Activated CD8-positive, alpha-beta T cell treated with anti-CD3 and anti-CD28 coated beads for 36 hours (primary cell): ENCODE measurements at regions of chr10 and their contacts with region 1.

Region 1: DNA sequence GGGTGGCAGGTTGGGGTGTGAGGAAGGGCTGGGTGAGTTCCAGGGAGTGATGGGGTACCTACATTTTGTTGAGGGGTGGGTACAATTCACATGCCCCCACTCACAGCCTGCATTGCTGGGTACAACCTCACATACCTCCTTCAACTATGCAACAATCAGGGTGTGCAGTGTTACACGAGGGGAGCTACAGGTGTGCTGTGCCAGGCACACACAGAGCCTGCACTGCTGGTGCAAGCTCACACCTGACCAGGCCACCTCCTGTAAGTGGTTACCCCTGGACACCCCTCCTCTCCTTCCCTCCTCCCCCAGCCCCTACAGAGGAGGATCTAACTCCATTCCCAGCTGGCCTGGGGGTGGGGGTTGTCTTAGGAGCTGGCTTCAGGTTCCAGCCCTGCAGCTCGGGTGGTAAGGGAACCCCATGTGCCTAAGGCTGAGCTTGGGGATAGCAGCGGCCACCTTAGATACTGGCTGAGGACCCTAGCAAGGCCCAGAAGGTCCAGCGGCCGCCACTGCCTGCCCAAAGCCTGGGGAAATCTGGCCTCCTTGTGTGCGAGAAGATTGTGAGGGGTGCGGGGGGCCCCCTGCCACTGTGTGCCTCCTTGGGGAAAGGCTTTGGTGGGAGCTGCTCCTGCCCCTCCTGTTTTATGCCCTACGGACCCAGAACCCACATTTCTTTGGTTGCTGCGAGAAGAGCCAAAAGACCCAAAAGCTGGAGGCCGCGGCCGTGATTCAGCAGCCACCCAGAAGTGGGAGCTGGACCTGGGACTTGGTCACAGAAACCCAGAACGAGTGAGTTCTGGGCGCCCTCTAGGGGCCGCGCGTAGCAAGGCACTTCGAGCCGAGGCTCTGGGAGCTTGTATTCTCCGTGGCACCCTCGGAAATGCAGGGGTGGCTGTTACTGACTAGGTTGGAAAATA is 10.8 kb downstream of the TLX1 start:
- DNase-seq: peak; percentile 89
- ATAC-seq: peak; percentile 93
- H3K4me3 Mint-ChIP-seq: no peak overlapping the region
- H3K27ac Mint-ChIP-seq: no peak overlapping the region
- H3K4me1 Mint-ChIP-seq: peaks cover 14% of the 10 kb centered on the region
- H3K27me3 Mint-ChIP-seq: peaks cover 81% of the 10 kb centered on the region
- CTCF ChIP-seq: peak; percentile 99

Region 2: GRCh38 chr10:100872034-100872791 is 269.7 kb before region 1 on chr10:
- CTCF ChIA-PET with region 1: no interaction called
- POLR2A ChIA-PET with region 1: no interaction called
- intact Hi-C with region 1: no loop called
- DNase-seq: peak; percentile 78
- ATAC-seq: peak; percentile 87
- H3K4me3 Mint-ChIP-seq: no peak overlapping the region
- H3K27ac Mint-ChIP-seq: no peak overlapping the region
- H3K4me1 Mint-ChIP-seq: no peaks in the 10 kb centered on the region
- H3K27me3 Mint-ChIP-seq: peaks cover 8% of the 10 kb centered on the region
- CTCF ChIP-seq: peak; percentile 69

Region 3: GRCh38 chr10:101050208-101051069 is 91.4 kb before region 1 on chr10:
- CTCF ChIA-PET with region 1: interaction called, 58 read pairs
- POLR2A ChIA-PET with region 1: no interaction called
- intact Hi-C with region 1: no loop called
- DNase-seq: peak; percentile 83
- ATAC-seq: peak; percentile 97
- H3K4me3 Mint-ChIP-seq: no peak overlapping the region
- H3K27ac Mint-ChIP-seq: no peak overlapping the region
- H3K4me1 Mint-ChIP-seq: peaks cover 9% of the 10 kb centered on the region
- H3K27me3 Mint-ChIP-seq: peaks cover 48% of the 10 kb centered on the region
- CTCF ChIP-seq: peak; percentile 88

Region 4: GRCh38 chr10:101085846-101086245 is 56.0 kb before region 1 on chr10:
- CTCF ChIA-PET with region 1: interaction called, 507 read pairs
- POLR2A ChIA-PET with region 1: no interaction called
- intact Hi-C with region 1: no loop called
- DNase-seq: no peak
- ATAC-seq: no peak
- H3K4me3 Mint-ChIP-seq: no peak overlapping the region
- H3K27ac Mint-ChIP-seq: no peak overlapping the region
- H3K4me1 Mint-ChIP-seq: no peaks in the 10 kb centered on the region
- H3K27me3 Mint-ChIP-seq: peaks cover 47% of the 10 kb centered on the region
- CTCF ChIP-seq: no peak

Region 5: GRCh38 chr10:101120884-101121653 is 20.8 kb before region 1 on chr10:
- CTCF ChIA-PET with region 1: interaction called, 49 read pairs
- POLR2A ChIA-PET with region 1: interaction called, 6 read pairs
- intact Hi-C with region 1: no loop called
- DNase-seq: peak; percentile 58
- ATAC-seq: peak; percentile 77
- H3K4me3 Mint-ChIP-seq: peak overlapping the region; percentile 73
- H3K27ac Mint-ChIP-seq: peak overlapping the region; percentile 52
- H3K4me1 Mint-ChIP-seq: peaks cover 26% of the 10 kb centered on the region
- H3K27me3 Mint-ChIP-seq: peaks cover 45% of the 10 kb centered on the region
- CTCF ChIP-seq: no peak

Region 6: GRCh38 chr10:101161494-101162299 is 19.8 kb after region 1 on chr10:
- CTCF ChIA-PET with region 1: interaction called, 93 read pairs
- POLR2A ChIA-PET with region 1: no interaction called
- intact Hi-C with region 1: no loop called
- DNase-seq: peak; percentile 77
- ATAC-seq: peak; percentile 96
- H3K4me3 Mint-ChIP-seq: no peak overlapping the region
- H3K27ac Mint-ChIP-seq: no peak overlapping the region
- H3K4me1 Mint-ChIP-seq: peaks cover 5% of the 10 kb centered on the region
- H3K27me3 Mint-ChIP-seq: peaks cover 52% of the 10 kb centered on the region
- CTCF ChIP-seq: peak; percentile 95